Mammary epithelial cell (primary cell): ENCODE measurements at regions of chr12 and their contacts with region 1.

Region 1: GRCh38 chr12:47307680-47308399 is 228.1 kb upstream of the AMIGO2 start:
- DNase-seq: peak; percentile 65
- H3K4me3 ChIP-seq: no peak overlapping the region
- H3K27ac ChIP-seq: no peak overlapping the region
- H3K4me1 ChIP-seq: peaks cover 17% of the 10 kb centered on the region
- H3K27me3 ChIP-seq: no peaks in the 10 kb centered on the region
- CTCF ChIP-seq: peak; percentile 67 to 76

Region 2: DNA sequence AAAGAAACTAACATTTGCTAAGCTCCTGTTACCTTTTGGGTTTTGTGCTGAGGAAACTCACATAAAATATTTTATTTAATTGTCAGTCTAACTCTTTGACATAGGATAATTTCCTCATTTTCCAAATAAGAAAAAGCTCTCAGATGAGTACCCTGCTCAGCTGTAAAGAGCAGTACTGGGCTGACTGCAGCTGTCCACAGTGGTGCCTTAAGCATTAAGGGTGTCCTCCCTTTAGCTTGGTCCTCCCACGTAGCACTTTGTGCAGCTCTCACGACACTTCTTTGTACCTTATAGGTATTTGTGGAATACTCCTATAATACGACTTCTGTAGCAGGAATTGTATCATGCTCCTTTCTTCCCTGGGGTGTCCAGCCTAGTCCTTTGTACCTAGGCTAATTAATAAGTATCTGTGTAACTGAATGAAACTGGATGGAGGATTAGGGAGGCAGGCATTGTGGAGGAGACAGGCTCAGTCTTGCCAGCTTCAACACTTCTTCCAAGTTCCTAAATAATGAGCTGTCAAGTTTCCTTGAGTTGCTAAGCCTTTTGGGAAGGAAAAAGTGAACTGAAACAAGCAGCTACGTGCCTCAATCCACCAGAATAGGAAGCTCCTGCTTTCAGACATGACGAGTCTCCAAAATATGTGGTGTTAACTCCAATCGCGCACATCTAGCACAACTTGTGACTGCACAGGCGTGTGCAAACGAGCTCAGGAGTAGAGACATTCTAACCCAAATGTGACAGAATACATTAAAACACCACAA is 605.1 kb before region 1 on chr12:
- CTCF ChIA-PET with region 1: no interaction called
- dilution Hi-C with region 1: no loop called
- in situ Hi-C with region 1: no loop called
- intact Hi-C with region 1: no loop called
- DNase-seq: peak; percentile 99
- H3K4me3 ChIP-seq: peak overlapping the region in 1 of 3 experiments; percentile 12
- H3K27ac ChIP-seq: peak overlapping the region; percentile 99
- H3K4me1 ChIP-seq: peaks cover 29% of the 10 kb centered on the region
- H3K27me3 ChIP-seq: no peaks in the 10 kb centered on the region
- CTCF ChIP-seq: no peak

Region 3: DNA sequence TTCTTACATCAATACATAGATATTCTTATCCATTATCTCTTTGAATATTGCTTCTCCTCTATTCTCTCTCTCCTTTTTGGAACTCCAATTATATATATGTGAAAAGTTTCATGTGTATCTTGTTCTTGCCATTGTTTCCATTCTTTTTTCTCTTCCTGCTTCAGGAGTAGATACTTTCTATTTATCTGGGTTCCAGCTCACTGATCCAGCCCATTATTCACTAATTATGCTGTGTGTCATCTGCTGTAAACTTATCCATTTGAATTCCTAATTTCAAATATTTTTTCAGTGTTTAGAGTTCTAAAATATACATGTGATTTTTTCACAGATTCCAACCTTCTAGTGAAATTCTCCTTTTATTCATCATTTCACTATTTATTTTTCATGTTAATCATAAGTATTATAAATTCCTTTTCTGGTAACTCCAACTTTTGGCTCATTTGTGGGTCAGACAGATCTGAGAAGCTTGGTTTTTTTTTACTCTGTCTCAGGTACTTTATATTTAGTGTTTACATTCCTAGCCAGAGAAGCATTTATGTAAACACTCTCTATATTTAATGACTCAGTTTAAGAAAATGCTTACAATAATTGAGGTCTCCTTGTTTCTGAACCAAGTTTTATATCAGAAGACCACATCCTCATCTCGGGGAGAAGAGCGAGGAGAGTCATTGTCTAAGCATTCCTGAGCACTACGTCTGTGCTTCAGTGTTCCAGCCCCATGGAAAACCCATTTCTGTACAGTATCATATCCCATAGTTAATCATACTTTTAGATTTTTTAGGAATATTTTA is 212.2 kb before region 1 on chr12:
- CTCF ChIA-PET with region 1: interaction called, 46 read pairs
- dilution Hi-C with region 1: no loop called
- in situ Hi-C with region 1: no loop called
- intact Hi-C with region 1: no loop called
- DNase-seq: peak; percentile 78
- H3K4me3 ChIP-seq: peak overlapping the region in 1 of 3 experiments; percentile 25
- H3K27ac ChIP-seq: peak overlapping the region; percentile 92
- H3K4me1 ChIP-seq: peaks cover 36% of the 10 kb centered on the region
- H3K27me3 ChIP-seq: no peaks in the 10 kb centered on the region
- CTCF ChIP-seq: no peak

Region 4: DNA sequence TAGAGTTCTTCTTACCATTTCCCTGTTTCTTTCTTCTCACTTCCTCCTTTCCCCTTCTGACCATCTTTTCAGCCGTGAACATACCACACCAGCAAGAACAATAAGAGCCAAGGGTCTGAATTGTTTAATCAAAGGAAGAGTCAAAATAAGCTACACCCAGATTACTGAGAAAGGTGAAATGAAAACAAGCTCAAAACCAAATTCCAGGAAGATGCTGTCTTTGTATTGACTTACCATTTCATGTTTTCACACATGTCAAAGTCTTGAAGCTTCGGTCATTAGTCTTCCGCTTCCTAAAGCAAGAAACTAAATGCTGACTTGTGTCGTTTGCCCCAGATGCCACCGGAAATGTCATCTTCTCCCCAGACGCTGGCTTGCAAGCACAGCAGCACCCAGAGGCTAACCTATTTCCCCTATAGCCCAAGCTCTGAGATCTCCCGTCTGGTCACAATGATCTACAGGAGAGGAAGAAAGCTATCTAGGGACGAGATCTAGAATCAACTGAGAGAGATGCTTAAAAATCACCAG is 91.6 kb before region 1 on chr12:
- CTCF ChIA-PET with region 1: no interaction called
- dilution Hi-C with region 1: no loop called
- in situ Hi-C with region 1: no loop called
- intact Hi-C with region 1: loop called (anchors 1 kb)
- DNase-seq: no peak
- H3K4me3 ChIP-seq: no peak overlapping the region
- H3K27ac ChIP-seq: no peak overlapping the region
- H3K4me1 ChIP-seq: peaks cover 53% of the 10 kb centered on the region
- H3K27me3 ChIP-seq: no peaks in the 10 kb centered on the region
- CTCF ChIP-seq: no peak

Region 5: DNA sequence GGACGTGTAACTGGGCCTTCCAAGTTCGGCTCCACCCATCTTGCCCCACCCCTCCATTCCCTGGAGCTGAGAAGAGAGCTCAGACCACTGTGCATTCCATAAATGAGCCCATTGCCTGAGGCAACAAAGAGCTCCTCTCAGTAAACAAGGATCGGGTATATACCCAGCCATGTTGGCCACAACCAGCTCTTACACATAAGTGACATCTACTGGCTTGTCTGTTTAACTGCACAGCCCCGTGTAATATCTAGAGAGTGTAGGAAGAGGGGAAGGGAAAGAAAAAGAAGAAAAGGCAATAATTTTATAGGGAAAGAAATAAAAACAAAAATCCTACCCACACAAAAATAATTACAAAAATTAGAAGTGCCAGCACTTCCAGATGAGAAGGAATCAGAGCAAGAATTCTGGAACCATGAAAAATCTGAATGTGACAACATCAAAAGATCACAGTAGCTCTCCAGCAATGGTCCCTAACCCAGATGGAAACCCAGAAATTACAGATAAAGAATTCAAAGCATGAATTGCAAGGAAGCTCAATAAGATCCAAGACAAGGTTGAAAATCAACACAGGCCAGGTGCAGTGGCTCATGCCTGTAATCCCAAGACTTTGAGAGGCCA is 89.9 kb after region 1 on chr12:
- CTCF ChIA-PET with region 1: no interaction called
- dilution Hi-C with region 1: no loop called
- in situ Hi-C with region 1: no loop called
- intact Hi-C with region 1: loop called (anchors 1 kb)
- DNase-seq: peak; percentile 74
- H3K4me3 ChIP-seq: no peak overlapping the region
- H3K27ac ChIP-seq: no peak overlapping the region
- H3K4me1 ChIP-seq: peaks cover 17% of the 10 kb centered on the region
- H3K27me3 ChIP-seq: no peaks in the 10 kb centered on the region
- CTCF ChIP-seq: peak; percentile 77 to 83